Activated CD4-positive, alpha-beta T cell treated with anti-CD3 and anti-CD28 coated beads for 36 hours (primary cell): ENCODE measurements at regions of chr11 and their contacts with region 1.

Region 1: GRCh38 chr11:47552566-47553416 is at the start of gene CELF1:
- DNase-seq: peak; percentile 97
- ATAC-seq: peak; percentile 94
- H3K4me3 Mint-ChIP-seq: peak within 1 kb of the TSS; percentile 96
- H3K27ac Mint-ChIP-seq: peak within 1 kb of the TSS; percentile 94
- H3K4me1 Mint-ChIP-seq: peaks cover 38% of the 10 kb centered on the region
- H3K27me3 Mint-ChIP-seq: no peaks in the 10 kb centered on the region
- total RNA-seq, gene CELF1: 132 to 143 TPM

Region 2: DNA sequence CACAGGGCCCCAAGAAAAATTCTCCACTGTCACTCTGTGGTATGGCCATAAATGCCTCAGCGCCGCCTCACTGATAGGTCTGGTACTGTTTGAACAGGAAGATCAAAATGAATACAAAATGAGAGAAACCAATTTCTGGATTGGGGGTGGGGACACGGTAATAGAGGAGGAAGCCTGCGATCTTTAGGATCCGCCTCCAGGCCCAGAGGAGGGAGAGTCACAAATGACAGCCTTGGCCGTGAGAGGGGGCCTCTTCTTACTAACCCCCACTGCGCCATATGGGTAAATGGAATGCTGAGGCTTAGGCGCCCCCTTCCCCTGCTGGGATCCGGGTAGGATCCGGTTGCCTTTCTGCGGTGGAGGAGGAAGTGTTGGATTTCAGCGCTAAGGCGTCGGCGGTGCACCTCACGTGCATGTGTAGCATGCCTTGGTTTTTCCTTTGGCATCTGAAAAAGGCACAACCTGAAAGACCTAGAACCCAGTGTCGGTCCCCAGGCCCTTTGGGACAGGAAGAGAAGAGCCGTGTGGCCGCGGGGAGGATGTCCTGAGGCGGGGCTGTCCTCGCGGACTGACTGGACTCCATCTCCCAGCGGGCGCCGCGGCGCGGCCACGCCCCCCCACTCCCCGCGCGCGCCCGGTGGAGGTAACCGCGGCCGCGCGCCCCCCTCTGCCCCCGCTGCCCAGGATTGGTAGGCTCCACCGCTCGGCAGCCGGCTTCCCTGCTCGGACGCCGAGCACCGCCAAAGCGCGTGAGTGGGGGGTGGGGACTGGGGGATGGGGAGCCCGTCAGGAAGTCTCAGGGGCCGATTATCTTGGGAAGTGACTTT is 283.6 kb before region 1 on chr11:
- CTCF ChIA-PET with region 1: no interaction called
- POLR2A ChIA-PET with region 1: no interaction called
- intact Hi-C with region 1: loop called in 1 of 2 experiments (anchors 1 kb)
- DNase-seq: peak; percentile 93
- ATAC-seq: peak; percentile 61
- H3K4me3 Mint-ChIP-seq: peak overlapping the region; percentile 76
- H3K27ac Mint-ChIP-seq: peak overlapping the region; percentile 98
- H3K4me1 Mint-ChIP-seq: peaks cover 60% of the 10 kb centered on the region
- H3K27me3 Mint-ChIP-seq: no peaks in the 10 kb centered on the region

Region 3: DNA sequence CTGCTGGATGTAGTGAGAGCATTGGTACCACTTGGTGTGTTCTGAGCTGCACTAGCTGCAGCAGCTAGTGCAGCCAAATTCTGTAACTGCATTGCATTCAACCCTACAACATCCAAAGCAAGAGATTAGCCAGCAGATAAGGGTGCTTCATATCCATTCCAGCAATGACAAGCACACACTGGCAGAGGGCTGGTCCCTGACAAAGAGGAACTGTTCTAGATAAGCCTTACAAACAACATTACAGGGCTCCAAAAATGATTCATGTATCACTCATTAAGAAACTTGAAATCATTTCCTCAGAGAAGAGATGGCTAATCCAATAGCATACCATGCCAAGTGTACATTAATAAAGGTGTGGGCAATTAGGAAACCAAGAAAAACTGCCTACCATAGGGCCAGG is 75.5 kb before region 1 on chr11:
- CTCF ChIA-PET with region 1: interaction called, 3 read pairs
- POLR2A ChIA-PET with region 1: no interaction called
- intact Hi-C with region 1: loop called in 1 of 2 experiments (anchors 2 kb)
- DNase-seq: peak; percentile 46
- ATAC-seq: peak; percentile 95
- H3K4me3 Mint-ChIP-seq: no peak overlapping the region
- H3K27ac Mint-ChIP-seq: peak overlapping the region; percentile 82
- H3K4me1 Mint-ChIP-seq: peaks cover 16% of the 10 kb centered on the region
- H3K27me3 Mint-ChIP-seq: no peaks in the 10 kb centered on the region

Region 4: DNA sequence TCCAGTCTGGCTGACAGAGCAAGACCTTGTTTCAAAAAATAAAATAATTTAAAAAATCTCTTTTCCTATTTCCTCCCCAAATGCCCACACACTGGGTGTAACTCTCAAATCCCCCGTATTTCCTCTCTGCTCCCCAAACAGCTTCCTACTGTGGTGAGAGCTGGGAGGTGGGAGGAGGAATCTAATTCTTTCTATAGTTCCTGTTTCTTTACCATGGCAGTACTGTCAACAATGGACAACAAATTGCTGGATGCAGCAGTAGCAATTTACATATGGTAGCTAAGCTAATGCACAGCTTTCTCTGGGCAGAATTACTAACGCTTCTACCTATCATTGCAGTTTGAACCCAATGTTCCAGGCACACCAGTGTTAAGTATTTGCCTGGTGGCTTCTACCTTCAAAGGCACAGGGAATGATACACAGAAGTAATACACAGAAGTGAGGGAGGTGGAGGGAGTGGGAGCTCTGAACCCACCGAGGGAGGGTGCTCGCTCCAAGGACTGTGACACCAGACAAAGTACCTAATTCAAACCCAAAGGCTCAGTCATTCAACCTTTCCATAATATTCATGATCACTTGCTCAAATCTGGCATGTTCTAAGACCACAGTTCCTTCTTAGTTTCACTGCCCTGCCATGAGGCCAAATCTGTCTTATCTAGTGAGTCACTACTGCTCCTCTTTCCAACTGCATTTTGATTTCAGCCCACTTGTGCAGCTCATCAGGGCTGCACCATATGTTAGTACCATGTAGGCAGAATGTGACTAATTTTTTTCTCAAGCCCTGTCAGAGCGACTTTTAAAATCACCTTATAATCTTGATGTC is 37.8 kb before region 1 on chr11:
- CTCF ChIA-PET with region 1: interaction called, 12 read pairs
- POLR2A ChIA-PET with region 1: interaction called, 5 read pairs
- intact Hi-C with region 1: loop called (anchors 1 kb)
- DNase-seq: peak; percentile 69
- ATAC-seq: peak; percentile 95
- H3K4me3 Mint-ChIP-seq: peak overlapping the region; percentile 0
- H3K27ac Mint-ChIP-seq: peak overlapping the region; percentile 84
- H3K4me1 Mint-ChIP-seq: peaks cover 89% of the 10 kb centered on the region
- H3K27me3 Mint-ChIP-seq: no peaks in the 10 kb centered on the region

Region 5: GRCh38 chr11:47538741-47539574 is 13.8 kb before region 1 on chr11:
- CTCF ChIA-PET with region 1: interaction called, 17 read pairs
- POLR2A ChIA-PET with region 1: interaction called, 8 read pairs
- intact Hi-C with region 1: no loop called
- DNase-seq: no peak
- ATAC-seq: no peak
- H3K4me3 Mint-ChIP-seq: no peak overlapping the region
- H3K27ac Mint-ChIP-seq: peak overlapping the region; percentile 83
- H3K4me1 Mint-ChIP-seq: peaks cover 71% of the 10 kb centered on the region
- H3K27me3 Mint-ChIP-seq: no peaks in the 10 kb centered on the region

Region 6: GRCh38 chr11:47578524-47579460 is 26.0 kb after region 1 on chr11 and contains the starts of genes KBTBD4 and NDUFS3:
- CTCF ChIA-PET with region 1: interaction called, 9 read pairs
- POLR2A ChIA-PET with region 1: interaction called, 4 read pairs
- intact Hi-C with region 1: loop called (anchors 1 to 2 kb)
- DNase-seq: peak; percentile 92
- ATAC-seq: peak; percentile 96
- H3K4me3 Mint-ChIP-seq: peak within 1 kb of the TSS; percentile 87
- H3K27ac Mint-ChIP-seq: peak within 1 kb of the TSS; percentile 93
- H3K4me1 Mint-ChIP-seq: peaks cover 39% of the 10 kb centered on the region
- H3K27me3 Mint-ChIP-seq: no peaks in the 10 kb centered on the region
- total RNA-seq, gene KBTBD4: 11.9 to 18.4 TPM
- total RNA-seq, gene NDUFS3: 96.9 to 108 TPM

Region 7: DNA sequence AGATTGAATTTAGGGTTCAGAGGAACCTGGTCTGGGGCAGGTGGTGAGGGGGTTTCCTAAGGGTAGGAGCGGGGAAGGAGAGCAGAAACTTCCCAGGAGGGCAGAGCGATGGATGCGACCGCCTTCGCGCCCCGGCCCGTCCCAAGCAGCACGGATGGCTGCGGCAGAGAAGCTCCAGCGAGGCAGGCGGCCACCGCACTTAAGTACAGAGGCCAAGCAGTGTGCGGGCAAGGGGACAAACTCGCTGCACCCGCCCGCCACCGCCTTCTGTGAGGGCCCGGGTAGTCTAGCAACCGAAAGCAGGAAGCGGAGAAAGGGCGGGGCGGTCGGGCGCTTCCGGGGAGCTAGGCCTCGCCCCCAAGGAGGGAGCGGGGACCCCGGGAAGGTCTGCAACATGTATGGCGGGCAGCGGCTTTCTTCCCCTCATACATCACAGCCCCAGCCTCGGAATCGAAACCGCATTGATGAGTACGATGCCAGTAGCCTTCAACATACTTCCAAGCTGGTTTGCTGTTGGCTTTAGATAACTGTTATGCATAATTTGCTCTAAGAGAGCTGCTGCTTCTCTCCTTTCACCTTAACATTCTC is 162.4 kb after region 1 on chr11 and contains the start of gene AGBL2:
- CTCF ChIA-PET with region 1: interaction called, 3 read pairs
- POLR2A ChIA-PET with region 1: no interaction called
- intact Hi-C with region 1: loop called in 1 of 2 experiments (anchors 1 kb)
- DNase-seq: peak; percentile 92
- ATAC-seq: peak; percentile 98
- H3K4me3 Mint-ChIP-seq: peak within 1 kb of the TSS; percentile 91
- H3K27ac Mint-ChIP-seq: peak within 1 kb of the TSS; percentile 96
- H3K4me1 Mint-ChIP-seq: peaks cover 22% of the 10 kb centered on the region
- H3K27me3 Mint-ChIP-seq: no peaks in the 10 kb centered on the region
- total RNA-seq, gene AGBL2: 3.5 to 5.6 TPM